CD4-positive, alpha-beta memory T cell (primary cell): ENCODE measurements at regions of chr11 and their contacts with region 1.

Region 1: GRCh38 chr11:129117595-129118350 is 74.4 kb downstream of the ARHGAP32 start:
- DNase-seq: peak; percentile 45 to 55 (median 49)
- H3K4me3 ChIP-seq: no peak overlapping the region
- H3K4me3 Mint-ChIP-seq: no peak overlapping the region
- H3K27ac ChIP-seq: no peak overlapping the region
- H3K27ac Mint-ChIP-seq: no peak overlapping the region
- H3K4me1 ChIP-seq: no peaks in the 10 kb centered on the region
- H3K4me1 Mint-ChIP-seq: no peaks in the 10 kb centered on the region
- H3K27me3 ChIP-seq: no peaks in the 10 kb centered on the region
- H3K27me3 Mint-ChIP-seq: peaks cover 2 to 7% of the 10 kb centered on the region in 2 donors

Region 2: DNA sequence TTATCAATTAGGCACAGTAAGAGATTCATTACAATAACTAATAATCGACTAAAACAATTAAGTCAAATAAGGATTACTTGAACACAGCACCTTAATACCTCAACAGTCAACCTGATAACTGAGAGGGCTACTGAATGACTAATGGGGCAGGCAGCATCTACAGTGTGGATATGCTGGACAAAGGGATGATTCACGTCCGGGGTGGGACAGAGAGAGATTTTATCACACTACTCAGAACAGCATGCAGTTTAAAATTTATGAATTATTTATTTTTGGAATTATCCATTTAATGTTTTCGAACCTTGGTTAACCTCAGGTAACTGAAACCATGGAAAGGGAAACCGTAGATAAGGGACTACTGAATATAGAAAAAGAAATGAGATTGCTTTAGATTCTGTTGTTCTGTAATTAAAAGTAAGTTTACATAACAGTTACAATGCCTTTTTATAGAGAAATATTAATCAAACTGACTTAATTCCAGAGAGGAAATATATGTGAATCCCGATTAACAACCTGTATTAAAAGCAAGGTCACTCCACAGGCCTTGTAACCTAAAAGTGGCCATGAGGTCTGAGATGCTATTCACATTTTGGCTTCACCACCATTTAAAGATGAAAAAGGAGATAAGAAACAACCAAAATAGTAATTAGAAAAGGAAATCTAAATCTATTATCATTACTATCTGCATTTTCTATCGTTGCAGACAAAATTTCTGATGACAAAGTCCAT is 56.1 kb before region 1 on chr11:
- CTCF ChIA-PET with region 1: no interaction called
- POLR2A ChIA-PET with region 1: no interaction called
- intact Hi-C with region 1: no loop called
- DNase-seq: no peak
- H3K4me3 ChIP-seq: no peak overlapping the region
- H3K4me3 Mint-ChIP-seq: no peak overlapping the region
- H3K27ac ChIP-seq: no peak overlapping the region
- H3K27ac Mint-ChIP-seq: no peak overlapping the region
- H3K4me1 ChIP-seq: no peaks in the 10 kb centered on the region
- H3K4me1 Mint-ChIP-seq: no peaks in the 10 kb centered on the region
- H3K27me3 ChIP-seq: no peaks in the 10 kb centered on the region
- H3K27me3 Mint-ChIP-seq: no peaks in the 10 kb centered on the region

Region 3: DNA sequence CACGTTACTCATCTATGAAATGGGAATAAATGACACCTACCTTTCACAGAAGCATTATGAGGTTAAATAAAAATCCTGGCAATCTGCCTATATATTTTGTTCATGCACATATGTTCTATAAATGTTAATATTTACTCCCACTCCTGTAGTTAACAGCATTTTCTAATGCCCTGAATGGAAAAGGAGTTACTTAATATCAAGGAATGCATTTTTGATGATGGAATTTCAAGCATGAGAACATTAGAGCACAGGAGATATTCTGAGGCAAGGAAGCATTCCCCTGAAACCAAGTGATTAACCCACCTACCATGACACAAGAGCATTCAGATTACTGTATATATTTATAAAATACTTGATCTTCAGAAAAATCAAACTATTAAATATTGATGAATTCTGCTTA is 27.7 kb before region 1 on chr11:
- CTCF ChIA-PET with region 1: no interaction called
- POLR2A ChIA-PET with region 1: no interaction called
- intact Hi-C with region 1: no loop called
- DNase-seq: no peak
- H3K4me3 ChIP-seq: no peak overlapping the region
- H3K4me3 Mint-ChIP-seq: no peak overlapping the region
- H3K27ac ChIP-seq: no peak overlapping the region
- H3K27ac Mint-ChIP-seq: no peak overlapping the region
- H3K4me1 ChIP-seq: no peaks in the 10 kb centered on the region
- H3K4me1 Mint-ChIP-seq: no peaks in the 10 kb centered on the region
- H3K27me3 ChIP-seq: no peaks in the 10 kb centered on the region
- H3K27me3 Mint-ChIP-seq: no peaks in the 10 kb centered on the region

Region 4: GRCh38 chr11:129331871-129332274 is 214.1 kb after region 1 on chr11:
- CTCF ChIA-PET with region 1: interaction called, 27 read pairs
- POLR2A ChIA-PET with region 1: interaction called, 3 read pairs
- intact Hi-C with region 1: no loop called
- DNase-seq: peak; percentile 33 to 45 (median 36)
- H3K4me3 ChIP-seq: no peak overlapping the region
- H3K4me3 Mint-ChIP-seq: no peak overlapping the region
- H3K27ac ChIP-seq: no peak overlapping the region
- H3K27ac Mint-ChIP-seq: peak overlapping the region in 2 of 7 donors; percentile 79 to 83
- H3K4me1 ChIP-seq: no peaks in the 10 kb centered on the region
- H3K4me1 Mint-ChIP-seq: peaks cover 0 to 6% (median 2%) of the 10 kb centered on the region in 4 donors
- H3K27me3 ChIP-seq: no peaks in the 10 kb centered on the region
- H3K27me3 Mint-ChIP-seq: peaks cover 1 to 3% of the 10 kb centered on the region in 2 donors

Region 5: GRCh38 chr11:129402772-129403171 is 285.0 kb after region 1 on chr11:
- CTCF ChIA-PET with region 1: no interaction called
- POLR2A ChIA-PET with region 1: no interaction called
- intact Hi-C with region 1: no loop called
- DNase-seq: no peak
- H3K4me3 ChIP-seq: no peak overlapping the region
- H3K4me3 Mint-ChIP-seq: no peak overlapping the region
- H3K27ac ChIP-seq: no peak overlapping the region
- H3K27ac Mint-ChIP-seq: no peak overlapping the region
- H3K4me1 ChIP-seq: no peaks in the 10 kb centered on the region
- H3K4me1 Mint-ChIP-seq: no peaks in the 10 kb centered on the region
- H3K27me3 ChIP-seq: no peaks in the 10 kb centered on the region
- H3K27me3 Mint-ChIP-seq: peaks cover 2 to 5% of the 10 kb centered on the region in 2 donors

Region 6: DNA sequence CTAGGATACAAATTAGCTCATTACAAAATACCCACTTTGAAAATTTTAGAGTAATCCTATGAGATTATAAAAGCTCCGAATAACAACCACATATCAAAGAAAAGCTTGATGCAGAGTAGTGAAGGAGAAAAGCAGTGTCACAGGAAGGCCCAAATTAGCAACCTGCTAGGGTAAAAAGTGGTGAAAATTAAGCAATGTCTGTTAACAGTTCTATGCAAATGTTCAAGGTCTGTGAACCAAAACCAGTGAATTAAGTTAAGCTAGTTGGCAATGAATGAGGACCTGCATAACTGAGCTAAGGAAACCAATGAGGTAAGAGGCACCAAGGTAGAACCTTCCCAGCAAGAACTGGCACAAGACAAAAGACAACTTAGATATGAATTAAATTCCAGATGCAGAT is 855.3 kb after region 1 on chr11:
- CTCF ChIA-PET with region 1: no interaction called
- POLR2A ChIA-PET with region 1: no interaction called
- intact Hi-C with region 1: no loop called
- DNase-seq: no peak
- H3K4me3 ChIP-seq: no peak overlapping the region
- H3K4me3 Mint-ChIP-seq: no peak overlapping the region
- H3K27ac ChIP-seq: no peak overlapping the region
- H3K27ac Mint-ChIP-seq: no peak overlapping the region
- H3K4me1 ChIP-seq: no peaks in the 10 kb centered on the region
- H3K4me1 Mint-ChIP-seq: peaks cover 0 to 6% (median 4%) of the 10 kb centered on the region in 4 donors
- H3K27me3 ChIP-seq: no peaks in the 10 kb centered on the region
- H3K27me3 Mint-ChIP-seq: no peaks in the 10 kb centered on the region